HEK293 (cell line): ENCODE measurements at regions of chr19 and their contacts with region 1.

Region 1: DNA sequence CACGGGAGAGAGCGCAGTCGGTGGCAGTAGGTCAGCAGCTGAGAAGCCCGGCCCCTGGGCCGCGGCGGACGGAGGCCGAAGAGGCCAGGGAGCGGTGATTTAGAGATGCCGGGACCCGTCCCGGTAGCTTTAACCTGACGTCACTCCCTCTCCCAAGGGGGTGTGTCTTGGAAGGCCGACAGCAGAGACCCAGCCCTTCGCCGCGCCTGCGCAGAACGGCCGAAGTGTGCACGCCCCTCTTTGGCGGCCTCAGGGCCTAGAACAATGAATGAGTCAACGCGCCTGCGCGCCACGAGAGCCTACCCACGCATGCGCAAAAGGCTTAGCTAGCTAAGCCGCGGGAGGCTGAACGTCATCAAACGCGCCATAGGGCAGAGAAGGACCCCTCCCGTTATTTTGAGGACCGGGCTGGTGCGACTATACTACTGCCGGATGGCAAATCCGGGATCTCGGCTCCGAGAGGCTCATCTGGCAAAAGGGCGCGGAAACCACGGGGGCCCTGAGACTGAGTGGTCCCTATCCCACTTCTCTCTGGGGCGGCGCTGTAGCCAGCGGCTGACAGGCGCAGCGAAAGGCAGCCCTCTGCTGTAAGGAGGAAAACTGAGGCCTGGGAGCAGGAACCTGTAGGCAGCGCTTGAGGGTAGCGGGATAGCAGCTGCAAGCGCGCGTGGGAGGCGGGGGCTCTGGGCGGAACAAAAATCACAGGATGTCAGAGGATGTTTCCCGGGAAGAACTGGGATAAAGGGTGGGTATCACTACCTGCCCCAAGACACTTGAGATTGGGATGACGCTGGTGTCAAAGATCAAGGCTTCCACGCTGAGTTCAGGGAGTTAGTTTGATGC is at the starts of genes IRGQ and ZNF576:
- H3K4me3 ChIP-seq: peak within 1 kb of the TSS; percentile 54
- H3K27ac ChIP-seq: peak within 1 kb of the TSS; percentile 95
- H3K4me1 ChIP-seq: peaks cover 24% of the 10 kb centered on the region
- CTCF ChIP-seq: peak; percentile 99

Region 2: GRCh38 chr19:43526884-43527859 is 69.0 kb before region 1 on chr19 and contains the start of gene ETHE1:
- CTCF ChIA-PET with region 1: interaction called, 12 read pairs
- POLR2A ChIA-PET with region 1: interaction called, 4 read pairs
- H3K4me3 ChIP-seq: peak within 1 kb of the TSS; percentile 60
- H3K27ac ChIP-seq: peak within 1 kb of the TSS; percentile 64; the same call in 1 of the 2 replicates
- H3K4me1 ChIP-seq: peaks cover 30% of the 10 kb centered on the region
- CTCF ChIP-seq: peak; percentile 79

Region 3: DNA sequence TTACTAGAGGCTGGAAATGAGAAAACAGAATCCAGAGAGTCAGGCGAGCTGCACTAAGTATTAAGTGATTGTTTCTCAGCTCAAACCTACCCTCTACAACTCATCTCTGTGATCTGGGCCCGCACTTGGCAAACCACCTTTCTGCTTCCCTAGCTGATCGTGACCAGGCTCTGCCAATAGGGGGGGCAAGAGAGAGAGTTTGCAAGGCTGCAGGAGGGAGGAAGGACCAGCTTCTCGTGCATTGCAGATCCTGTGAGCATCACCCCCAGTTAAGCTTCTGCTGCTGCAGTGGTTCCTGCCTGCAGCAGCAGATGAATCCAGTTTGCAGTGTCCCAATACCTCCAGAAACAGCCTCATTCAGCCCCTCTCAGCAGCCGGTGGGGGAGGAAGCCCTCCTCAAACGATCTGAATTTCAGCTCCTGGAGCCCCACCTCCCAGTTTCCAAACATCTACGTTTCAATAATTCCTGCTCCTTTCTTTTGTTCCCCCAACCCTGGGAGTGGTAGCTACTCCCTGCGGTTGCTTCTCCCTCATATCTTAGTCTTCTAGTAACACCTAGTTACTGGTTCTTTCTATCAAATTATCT is 40.9 kb before region 1 on chr19:
- CTCF ChIA-PET with region 1: interaction called, 91 read pairs
- POLR2A ChIA-PET with region 1: interaction called, 25 read pairs
- H3K4me3 ChIP-seq: no peak overlapping the region
- H3K27ac ChIP-seq: no peak overlapping the region
- H3K4me1 ChIP-seq: no peaks in the 10 kb centered on the region
- CTCF ChIP-seq: peak; percentile 84

Region 4: GRCh38 chr19:43570174-43570791 is 25.9 kb before region 1 on chr19:
- CTCF ChIA-PET with region 1: interaction called, 10 read pairs
- POLR2A ChIA-PET with region 1: interaction called, 23 read pairs
- H3K4me3 ChIP-seq: no peak overlapping the region
- H3K27ac ChIP-seq: no peak overlapping the region
- H3K4me1 ChIP-seq: peaks cover 37% of the 10 kb centered on the region
- CTCF ChIP-seq: no peak

Region 5: DNA sequence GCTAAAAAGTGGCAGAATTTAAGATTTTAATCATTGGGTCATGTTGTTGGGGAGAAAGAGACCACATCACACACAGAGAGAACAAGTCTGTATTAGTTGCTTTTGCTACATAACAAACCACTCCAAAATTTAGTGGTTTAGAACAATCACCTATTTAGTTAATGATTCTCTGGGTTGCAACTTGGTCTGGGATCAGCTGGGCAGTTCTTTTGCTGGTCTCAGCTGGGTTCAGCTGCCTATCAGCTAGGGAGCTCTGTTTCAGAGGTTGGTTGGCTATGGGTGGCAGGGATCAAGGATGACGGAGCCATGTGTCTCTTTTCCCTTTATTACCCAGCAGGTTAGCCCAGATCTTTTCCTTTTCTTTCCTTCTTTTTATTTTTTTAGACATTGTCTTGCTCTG is 11.7 kb before region 1 on chr19:
- CTCF ChIA-PET with region 1: interaction called, 39 read pairs
- POLR2A ChIA-PET with region 1: interaction called, 14 read pairs
- H3K4me3 ChIP-seq: no peak overlapping the region
- H3K27ac ChIP-seq: no peak overlapping the region; the same call in 1 of the 2 replicates
- H3K4me1 ChIP-seq: no peaks in the 10 kb centered on the region
- CTCF ChIP-seq: no peak

Region 6: DNA sequence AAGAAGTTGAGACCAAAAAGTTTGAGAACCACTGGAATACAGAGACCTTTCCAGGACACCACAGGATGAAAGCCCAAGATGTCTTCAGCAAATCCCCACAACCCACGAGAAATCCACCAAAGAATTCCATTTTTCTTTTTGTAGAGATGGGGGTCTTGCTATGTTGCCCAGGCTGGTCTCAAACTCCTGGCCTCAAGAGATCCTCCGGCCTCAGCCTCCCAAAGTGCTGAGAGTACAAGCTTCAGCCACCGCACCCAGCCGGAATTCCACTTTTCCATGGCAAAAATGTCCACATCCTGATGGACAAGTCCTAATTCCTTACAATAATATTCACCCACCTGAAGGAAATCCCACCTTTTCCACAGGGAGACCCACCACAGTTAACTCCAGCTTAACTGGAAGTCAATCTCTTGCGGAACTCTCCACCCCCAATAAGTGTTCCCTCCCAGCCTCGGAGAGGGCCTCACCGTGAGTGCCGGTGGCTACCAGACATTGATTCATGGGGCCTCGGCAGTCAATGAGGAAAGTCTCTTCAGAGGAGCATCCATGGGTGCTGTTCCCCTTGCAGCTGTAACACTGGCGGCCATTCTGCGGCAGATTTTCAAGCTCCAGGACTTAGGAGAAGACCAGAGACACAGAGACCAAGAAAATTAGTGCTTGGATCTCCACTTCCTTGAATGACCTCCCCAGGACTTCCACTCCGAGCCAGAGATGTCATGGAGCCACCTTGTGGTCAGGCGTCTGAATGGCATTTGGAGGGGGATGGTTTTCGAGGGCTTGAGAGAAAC is 55.7 kb after region 1 on chr19:
- CTCF ChIA-PET with region 1: interaction called, 21 read pairs
- POLR2A ChIA-PET with region 1: interaction called, 3 read pairs
- H3K4me3 ChIP-seq: no peak overlapping the region
- H3K27ac ChIP-seq: 0 out of 2 replicates have a peak overlapping the region, but pooled peaks have one; percentile 1
- H3K4me1 ChIP-seq: peaks cover 3% of the 10 kb centered on the region
- CTCF ChIP-seq: peak; percentile 94